ENCODE measurements at regions of chr3 and their contacts with region 1.

Region 1: DNA sequence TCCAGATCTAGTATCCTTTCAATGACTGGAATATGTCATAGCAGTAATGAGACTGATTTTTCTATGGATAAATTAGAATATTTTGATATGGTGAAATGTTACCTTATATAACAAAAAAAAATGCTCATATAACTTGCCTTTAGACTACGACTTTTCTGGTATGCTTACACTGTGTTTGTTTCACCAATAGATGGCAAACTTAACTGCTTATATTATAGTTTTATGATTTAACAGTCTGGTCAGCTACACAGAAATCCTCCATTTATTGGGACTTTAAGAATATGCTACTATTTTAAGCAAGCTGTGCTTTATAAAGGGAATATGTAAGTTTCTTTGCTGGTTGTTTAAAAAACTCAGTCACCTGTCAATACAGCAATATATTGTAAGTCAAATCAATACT is 205.6 kb downstream of the VGLL3 start:
- DNase-seq: no peak
- ATAC-seq: no peak
- H3K4me3 ChIP-seq: no peak overlapping the region
- H3K27ac ChIP-seq: no peak overlapping the region
- H3K4me1 ChIP-seq: no peaks in the 10 kb centered on the region
- H3K27me3 ChIP-seq: no peaks in the 10 kb centered on the region
- CTCF ChIP-seq: no peak; a peak in 1 of 6 replicates
- POLR2A ChIP-seq: no peak
- RAD21 ChIP-seq: peak; percentile 19; the same call in 1 of the 2 replicates

Region 2: DNA sequence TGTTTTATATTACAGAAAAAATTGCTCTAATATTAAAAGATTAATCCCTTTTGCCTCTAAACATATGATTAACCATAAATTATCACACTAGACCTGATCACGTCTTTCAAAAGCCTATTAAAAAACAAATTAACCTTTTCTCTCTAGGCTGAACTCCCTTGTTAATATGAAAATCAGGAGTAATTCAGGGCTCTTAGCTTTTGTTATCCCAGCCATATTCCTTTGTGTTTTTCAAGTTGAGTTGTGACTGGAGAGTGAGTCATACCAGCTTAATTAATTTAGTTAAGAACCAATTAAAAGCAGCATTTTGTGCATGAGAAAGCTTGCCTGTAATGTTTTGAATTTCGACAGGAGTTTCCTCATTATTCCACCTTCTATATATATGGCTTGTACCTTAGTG is 180.2 kb before region 1 on chr3:
- CTCF ChIA-PET with region 1: no interaction called
- POLR2A ChIA-PET with region 1: no interaction called
- RAD21 ChIA-PET with region 1: no interaction called
- intact Hi-C with region 1: no loop called
- DNase-seq: no peak
- ATAC-seq: no peak
- H3K4me3 ChIP-seq: no peak overlapping the region
- H3K27ac ChIP-seq: no peak overlapping the region
- H3K4me1 ChIP-seq: no peaks in the 10 kb centered on the region
- H3K27me3 ChIP-seq: no peaks in the 10 kb centered on the region
- CTCF ChIP-seq: no peak
- POLR2A ChIP-seq: no peak
- RAD21 ChIP-seq: no peak

Region 3: DNA sequence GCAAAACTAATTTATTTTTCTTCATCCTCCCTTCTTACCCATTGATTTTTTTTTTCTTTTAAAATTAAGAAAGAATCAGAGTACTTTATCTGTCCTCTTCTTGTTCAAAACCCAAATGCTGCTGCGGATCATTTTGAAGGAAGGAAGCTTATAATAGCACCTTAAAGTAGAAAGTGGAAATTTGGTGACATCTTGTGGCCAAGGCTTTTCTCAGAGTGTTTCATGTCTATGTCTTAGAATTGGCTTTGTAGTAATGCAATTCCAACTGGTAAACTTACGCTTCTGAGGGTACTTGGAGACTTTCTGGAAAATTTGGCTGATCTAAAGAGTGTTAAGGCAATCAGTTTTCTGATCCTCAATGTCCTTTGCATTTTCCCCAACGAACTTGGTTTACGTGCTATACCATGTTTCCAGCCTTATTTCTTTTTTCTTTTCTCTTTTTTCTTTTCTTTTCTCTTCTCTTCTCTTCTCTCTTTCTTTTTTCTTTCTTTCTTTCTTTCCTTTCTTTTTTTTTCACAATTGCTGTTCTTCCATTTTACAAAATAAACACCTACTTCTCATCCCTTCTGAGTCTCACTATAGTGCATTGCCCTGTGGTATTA is 1395.1 kb after region 1 on chr3:
- CTCF ChIA-PET with region 1: no interaction called
- POLR2A ChIA-PET with region 1: no interaction called
- RAD21 ChIA-PET with region 1: no interaction called
- intact Hi-C with region 1: loop called (anchors 10 kb)
- DNase-seq: peak; percentile 10
- ATAC-seq: 0 out of 2 replicates have a peak, but pooled peaks have one; percentile 44
- H3K4me3 ChIP-seq: no peak overlapping the region
- H3K27ac ChIP-seq: no peak overlapping the region
- H3K4me1 ChIP-seq: no peaks in the 10 kb centered on the region
- H3K27me3 ChIP-seq: no peaks in the 10 kb centered on the region
- CTCF ChIP-seq: peak in 2 of 3 experiments; percentile 25 to 49; a peak in 3 of 6 replicates
- POLR2A ChIP-seq: no peak
- RAD21 ChIP-seq: peak; percentile 43